ENCODE measurements at regions of chrX and their contacts with region 1.

Region 1: GRCh38 chrX:10246846-10247245 is 90.1 kb downstream of the CLCN4 start:
- DNase-seq: no peak
- H3K4me3 Mint-ChIP-seq: no peak overlapping the region
- H3K27ac Mint-ChIP-seq: no peak overlapping the region
- H3K4me1 Mint-ChIP-seq: no peaks in the 10 kb centered on the region
- H3K27me3 Mint-ChIP-seq: no peaks in the 10 kb centered on the region
- CTCF ChIP-seq: no peak

Region 2: DNA sequence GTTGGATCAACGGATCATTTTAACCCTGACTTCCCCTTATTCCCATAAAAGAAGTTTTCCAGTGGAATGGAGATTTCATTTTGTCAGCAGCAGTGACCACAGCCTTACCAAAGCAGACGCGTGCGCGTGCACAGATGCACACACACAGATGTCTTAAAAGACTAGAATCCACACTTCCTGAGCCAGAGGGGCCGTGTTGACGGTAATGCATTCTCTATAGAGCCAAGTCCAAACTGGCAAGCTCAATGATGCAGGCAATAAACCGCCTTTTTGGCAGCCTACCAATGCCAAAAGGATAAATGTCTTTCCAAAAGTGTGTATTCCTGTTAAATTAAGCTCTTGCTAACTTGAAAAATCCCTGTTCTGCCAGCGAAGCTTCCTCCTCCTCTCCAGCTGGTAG is 298.4 kb before region 1 on chrX:
- CTCF ChIA-PET with region 1: no interaction called
- intact Hi-C with region 1: no loop called
- DNase-seq: no peak
- H3K4me3 Mint-ChIP-seq: no peak overlapping the region
- H3K27ac Mint-ChIP-seq: no peak overlapping the region
- H3K4me1 Mint-ChIP-seq: no peaks in the 10 kb centered on the region
- H3K27me3 Mint-ChIP-seq: no peaks in the 10 kb centered on the region
- CTCF ChIP-seq: no peak

Region 3: GRCh38 chrX:10221651-10222050 is 25.2 kb before region 1 on chrX:
- CTCF ChIA-PET with region 1: no interaction called
- intact Hi-C with region 1: loop called (anchors 1 kb)
- DNase-seq: no peak
- H3K4me3 Mint-ChIP-seq: no peak overlapping the region
- H3K27ac Mint-ChIP-seq: no peak overlapping the region
- H3K4me1 Mint-ChIP-seq: no peaks in the 10 kb centered on the region
- H3K27me3 Mint-ChIP-seq: no peaks in the 10 kb centered on the region
- CTCF ChIP-seq: no peak